Activated T-helper 1 cell treated with anti-CD3 and anti-CD28 coated beads, Interleukin-12 subunit alpha, Interleukin-12 subunit beta, Interleukin-2, Interleukin-4 antibody, amounts not matched to agents 30 ng/mL and 10 ng/mL and 1 ng/mL, durations not matched to agents 14 hours and 24 hours and 36 hours (primary cell): ENCODE measurements at regions of chr9 and their contacts with region 1.

Region 1: GRCh38 chr9:111483862-111484571 is at the start of gene ECPAS:
- DNase-seq: peak; percentile 65
- H3K4me3 Mint-ChIP-seq: peak within 1 kb of the TSS; percentile 87
- H3K27ac Mint-ChIP-seq: peak within 1 kb of the TSS; percentile 86
- H3K4me1 Mint-ChIP-seq: peaks cover 34% of the 10 kb centered on the region
- H3K27me3 Mint-ChIP-seq: peaks cover 3% of the 10 kb centered on the region
- total RNA-seq, gene ECPAS: 98.9 and 110 TPM in 2 replicates

Region 2: DNA sequence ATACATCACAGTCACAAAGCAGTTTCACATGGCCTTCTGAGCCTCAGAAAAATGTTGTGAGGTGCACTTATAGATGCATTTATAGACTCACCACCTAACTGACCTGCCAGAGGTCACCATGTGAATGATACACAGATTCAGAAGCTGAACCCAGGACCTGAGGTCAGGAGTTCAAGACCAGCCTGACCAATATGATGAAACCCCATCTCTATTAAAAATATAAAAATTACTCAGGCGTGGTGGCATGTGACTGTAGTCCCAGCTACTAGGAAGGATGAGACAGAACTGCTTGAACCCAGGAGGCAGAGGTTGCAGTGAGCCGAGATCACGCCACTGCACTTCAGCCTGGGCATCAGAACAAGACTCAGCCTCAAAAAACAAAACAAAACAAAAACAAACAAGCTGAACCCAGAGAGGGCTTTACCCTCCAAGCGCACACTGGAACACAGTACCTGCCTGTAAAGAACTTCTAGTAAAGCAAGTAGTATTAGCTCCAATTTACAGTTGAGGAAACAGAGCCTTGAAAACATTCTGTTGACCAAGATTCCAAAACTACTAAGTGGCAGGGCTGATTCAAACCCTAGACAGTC is 16.1 kb before region 1 on chr9:
- intact Hi-C with region 1: loop called (anchors 2 kb)
- DNase-seq: no peak
- H3K4me3 Mint-ChIP-seq: no peak overlapping the region
- H3K27ac Mint-ChIP-seq: no peak overlapping the region
- H3K4me1 Mint-ChIP-seq: peaks cover 20% of the 10 kb centered on the region
- H3K27me3 Mint-ChIP-seq: no peaks in the 10 kb centered on the region

Region 3: GRCh38 chr9:111516061-111516465 is 32.0 kb after region 1 on chr9:
- intact Hi-C with region 1: no loop called
- DNase-seq: no peak
- H3K4me3 Mint-ChIP-seq: no peak overlapping the region
- H3K27ac Mint-ChIP-seq: no peak overlapping the region
- H3K4me1 Mint-ChIP-seq: no peaks in the 10 kb centered on the region
- H3K27me3 Mint-ChIP-seq: peaks cover 4% of the 10 kb centered on the region

Region 4: GRCh38 chr9:111597817-111598729 is 114.1 kb after region 1 on chr9:
- intact Hi-C with region 1: loop called (anchors 2 kb)
- DNase-seq: peak; percentile 35
- H3K4me3 Mint-ChIP-seq: peak overlapping the region; percentile 83
- H3K27ac Mint-ChIP-seq: no peak overlapping the region
- H3K4me1 Mint-ChIP-seq: peaks cover 24% of the 10 kb centered on the region
- H3K27me3 Mint-ChIP-seq: peaks cover 33% of the 10 kb centered on the region

Region 5: GRCh38 chr9:111661150-111661801 is 177.3 kb after region 1 on chr9 and contains the start of gene GNG10:
- intact Hi-C with region 1: loop called (anchors 2 kb)
- DNase-seq: peak; percentile 66
- H3K4me3 Mint-ChIP-seq: peak within 1 kb of the TSS; percentile 89
- H3K27ac Mint-ChIP-seq: peak within 1 kb of the TSS; percentile 89
- H3K4me1 Mint-ChIP-seq: peaks cover 34% of the 10 kb centered on the region
- H3K27me3 Mint-ChIP-seq: no peaks in the 10 kb centered on the region
- total RNA-seq, gene GNG10: 30.7 and 35.4 TPM in 2 replicates

Region 6: DNA sequence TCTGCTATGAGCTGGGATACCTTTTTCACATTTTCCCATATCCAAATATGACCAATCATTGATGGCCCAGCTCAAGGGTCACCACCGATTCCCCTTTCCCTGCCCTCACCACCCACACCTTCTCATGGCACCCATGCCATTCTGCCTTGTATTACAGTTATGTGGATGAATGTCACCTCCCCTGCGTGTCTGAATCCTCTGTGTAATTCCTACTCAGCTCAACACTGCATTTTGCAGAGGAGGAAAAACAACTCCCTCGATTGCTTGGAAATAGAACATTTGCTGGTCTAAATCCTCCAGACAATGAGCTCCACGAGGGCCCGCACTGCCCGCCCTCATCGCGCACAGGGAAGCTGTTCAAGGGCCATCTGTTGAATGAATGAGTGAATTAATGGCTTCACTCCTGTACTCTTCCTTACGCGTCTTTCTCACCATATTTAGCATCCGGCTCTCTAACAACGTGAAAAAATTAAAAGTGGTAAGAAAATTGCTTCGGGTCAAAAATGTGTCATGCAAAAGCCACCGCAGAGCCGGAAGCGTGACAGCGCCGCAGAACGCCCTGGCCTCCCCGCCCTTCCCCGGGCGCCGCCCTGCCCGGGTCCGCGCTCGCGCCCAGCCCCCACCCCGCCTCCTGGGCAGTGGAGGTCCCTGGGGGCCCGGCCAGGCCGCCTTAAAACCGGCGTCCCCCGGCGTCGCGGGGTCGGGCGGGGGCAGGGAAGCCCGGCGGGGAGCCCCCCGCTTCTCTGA is 690.4 kb after region 1 on chr9:
- intact Hi-C with region 1: loop called (anchors 5 kb)
- DNase-seq: peak; percentile 73
- H3K4me3 Mint-ChIP-seq: peak overlapping the region; percentile 88
- H3K27ac Mint-ChIP-seq: peak overlapping the region; percentile 93
- H3K4me1 Mint-ChIP-seq: peaks cover 74% of the 10 kb centered on the region
- H3K27me3 Mint-ChIP-seq: peaks cover 1% of the 10 kb centered on the region

Region 7: GRCh38 chr9:112486221-112487007 is 1002.4 kb after region 1 on chr9 and contains the start of gene KIAA1958:
- intact Hi-C with region 1: loop called (anchors 5 kb)
- DNase-seq: peak; percentile 85
- H3K4me3 Mint-ChIP-seq: peak within 1 kb of the TSS; percentile 97
- H3K27ac Mint-ChIP-seq: peak within 1 kb of the TSS; percentile 96
- H3K4me1 Mint-ChIP-seq: peaks cover 36% of the 10 kb centered on the region
- H3K27me3 Mint-ChIP-seq: peaks cover 2% of the 10 kb centered on the region
- total RNA-seq, gene KIAA1958: 8.2 and 8.6 TPM in 2 replicates